B cell (primary cell): ENCODE measurements at regions of chr2 and their contacts with region 1.

Region 1: DNA sequence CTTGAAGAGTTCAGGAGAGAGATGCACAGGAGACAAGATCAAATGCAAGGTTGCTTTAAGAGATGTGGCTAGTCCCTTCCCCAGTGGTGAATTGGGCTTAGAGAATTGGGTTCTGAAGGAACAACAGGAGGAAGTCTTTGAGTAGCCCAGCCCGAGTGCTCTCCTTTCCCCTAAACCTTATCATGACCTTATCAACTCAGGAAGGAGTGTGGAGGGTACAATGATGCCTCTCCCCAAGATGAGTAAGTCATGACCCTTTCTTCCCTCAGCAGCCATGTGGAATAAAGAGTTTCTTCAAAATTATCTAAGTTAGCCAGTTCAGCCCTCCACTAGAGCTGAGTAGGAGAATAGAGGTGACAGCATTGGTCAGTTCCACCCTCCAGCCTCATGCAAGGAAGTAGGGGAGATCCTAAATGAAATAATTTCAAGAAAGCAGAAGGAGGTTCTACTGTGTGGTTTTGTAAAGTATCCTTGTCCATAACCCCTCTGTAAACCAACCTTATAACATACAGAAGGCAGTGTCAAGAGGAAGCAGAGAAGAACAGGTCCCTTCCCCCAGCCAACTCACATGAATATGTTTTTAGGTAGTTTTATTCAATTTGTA is 88.4 kb downstream of the ARHGAP15 start:
- DNase-seq: no peak
- ATAC-seq: peak; percentile 17
- H3K4me3 ChIP-seq: no peak overlapping the region
- H3K4me3 Mint-ChIP-seq: no peak overlapping the region
- H3K27ac ChIP-seq: peak overlapping the region in 1 of 2 donors; percentile 57
- H3K27ac Mint-ChIP-seq: peak overlapping the region; percentile 84
- H3K4me1 ChIP-seq: no peaks in the 10 kb centered on the region
- H3K4me1 Mint-ChIP-seq: peaks cover 16% of the 10 kb centered on the region
- H3K27me3 ChIP-seq: no peaks in the 10 kb centered on the region
- H3K27me3 Mint-ChIP-seq: no peaks in the 10 kb centered on the region
- CTCF ChIP-seq: no peak

Region 2: DNA sequence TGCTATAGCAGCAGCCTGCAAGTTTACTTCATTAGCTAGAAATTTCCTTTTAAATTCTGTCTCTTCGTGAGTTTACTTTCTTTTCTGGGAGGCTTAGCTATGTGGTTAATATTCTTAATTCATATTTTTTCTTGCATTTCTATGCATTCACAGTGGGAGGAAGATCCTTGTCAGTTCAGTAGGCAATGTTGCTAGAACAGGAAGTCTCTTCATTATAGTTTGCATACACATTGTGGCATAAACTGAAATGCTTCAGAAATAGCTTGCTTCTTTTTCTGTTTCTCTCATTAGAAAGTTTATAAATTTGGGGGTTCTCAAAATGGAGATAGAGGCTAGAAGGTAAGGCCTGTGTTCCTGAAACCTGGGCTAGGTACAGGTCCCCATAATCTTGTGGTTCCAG is 96.5 kb before region 1 on chr2:
- CTCF ChIA-PET with region 1: interaction called, 13 read pairs
- POLR2A ChIA-PET with region 1: no interaction called
- intact Hi-C with region 1: no loop called
- DNase-seq: no peak
- ATAC-seq: no peak
- H3K4me3 ChIP-seq: peak overlapping the region in 2 of 5 experiments; percentile 6 to 34
- H3K4me3 Mint-ChIP-seq: no peak overlapping the region
- H3K27ac ChIP-seq: peak overlapping the region; percentile 45 to 72
- H3K27ac Mint-ChIP-seq: no peak overlapping the region
- H3K4me1 ChIP-seq: peaks cover 33 to 35% of the 10 kb centered on the region in 2 donors
- H3K4me1 Mint-ChIP-seq: peaks cover 17% of the 10 kb centered on the region
- H3K27me3 ChIP-seq: no peaks in the 10 kb centered on the region
- H3K27me3 Mint-ChIP-seq: no peaks in the 10 kb centered on the region
- CTCF ChIP-seq: no peak

Region 3: DNA sequence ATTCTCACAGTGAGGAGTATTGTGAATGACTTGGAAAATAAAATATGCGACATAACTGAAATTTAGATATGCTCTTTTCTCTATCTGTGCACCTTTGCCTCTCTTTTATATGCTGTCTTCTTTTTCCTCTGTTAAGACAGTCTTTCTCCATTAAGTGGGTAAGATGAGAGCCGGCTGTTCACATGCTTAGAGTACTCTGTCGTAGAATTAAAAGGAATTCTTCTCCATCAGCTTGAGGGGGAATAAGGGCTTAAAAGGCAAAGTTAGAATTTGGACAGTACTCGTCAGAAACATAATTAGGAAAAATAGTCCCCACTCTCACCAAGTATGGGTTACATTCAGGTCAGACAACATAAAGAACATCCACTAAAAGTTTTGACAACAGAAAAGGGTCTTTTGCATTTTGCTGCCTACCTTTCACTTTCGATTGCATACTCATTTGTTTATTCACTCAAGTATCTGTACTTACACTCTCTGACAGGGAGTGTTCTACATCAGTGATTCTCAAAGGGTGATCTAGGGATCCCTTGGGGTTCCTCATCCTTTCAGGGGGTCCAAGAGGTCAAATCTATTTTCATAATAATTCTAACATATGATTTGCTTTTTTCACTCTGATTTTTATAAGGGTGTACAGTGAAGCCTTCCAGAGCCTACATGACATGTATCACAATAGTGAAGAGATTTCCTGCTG is 40.4 kb before region 1 on chr2:
- CTCF ChIA-PET with region 1: interaction called, 6 read pairs
- POLR2A ChIA-PET with region 1: no interaction called
- intact Hi-C with region 1: loop called (anchors 5 kb)
- DNase-seq: peak; percentile 74
- ATAC-seq: peak; percentile 95
- H3K4me3 ChIP-seq: peak overlapping the region in 3 of 5 experiments; percentile 29 to 57 (median 38)
- H3K4me3 Mint-ChIP-seq: peak overlapping the region; percentile 87
- H3K27ac ChIP-seq: peak overlapping the region; percentile 88 to 90
- H3K27ac Mint-ChIP-seq: peak overlapping the region; percentile 96
- H3K4me1 ChIP-seq: peaks cover 34 to 38% of the 10 kb centered on the region in 2 donors
- H3K4me1 Mint-ChIP-seq: peaks cover 61% of the 10 kb centered on the region
- H3K27me3 ChIP-seq: no peaks in the 10 kb centered on the region
- H3K27me3 Mint-ChIP-seq: no peaks in the 10 kb centered on the region
- CTCF ChIP-seq: no peak

Region 4: DNA sequence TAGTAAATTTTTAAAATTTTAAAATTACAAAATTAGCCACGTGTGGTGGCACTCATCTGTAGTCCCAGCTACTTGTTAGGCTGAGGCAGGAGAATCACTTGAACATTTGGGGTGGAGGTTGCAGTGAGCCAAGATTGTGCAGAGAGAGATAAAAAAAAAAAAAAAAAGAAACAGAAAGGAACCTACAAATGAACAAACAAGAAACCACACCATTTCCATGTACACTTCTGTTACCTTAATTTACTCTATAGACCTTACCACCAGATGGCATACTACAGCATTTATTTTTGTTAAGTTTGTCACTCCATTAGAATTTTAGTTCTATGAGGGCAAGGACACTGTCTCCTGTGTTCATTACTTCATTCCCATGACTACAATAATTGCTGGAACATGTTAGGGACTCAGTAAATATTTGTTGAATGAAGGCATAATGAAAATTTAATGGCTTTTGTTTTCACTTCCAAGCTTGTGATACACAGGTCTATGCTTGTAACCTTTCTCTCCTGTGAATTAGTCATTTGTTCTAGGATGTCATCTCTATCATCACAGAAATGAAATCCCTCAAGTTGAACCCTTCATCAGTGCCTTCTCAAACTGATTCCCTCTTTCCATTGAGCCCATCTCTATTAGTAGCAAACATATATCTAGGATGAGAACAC is 12.4 kb before region 1 on chr2:
- CTCF ChIA-PET with region 1: interaction called, 25 read pairs
- POLR2A ChIA-PET with region 1: no interaction called
- intact Hi-C with region 1: no loop called
- DNase-seq: peak; percentile 55
- ATAC-seq: peak; percentile 39
- H3K4me3 ChIP-seq: no peak overlapping the region
- H3K4me3 Mint-ChIP-seq: no peak overlapping the region
- H3K27ac ChIP-seq: peak overlapping the region in 1 of 2 donors; percentile 50
- H3K27ac Mint-ChIP-seq: peak overlapping the region; percentile 16
- H3K4me1 ChIP-seq: peaks cover 10 to 17% of the 10 kb centered on the region in 2 donors
- H3K4me1 Mint-ChIP-seq: peaks cover 29% of the 10 kb centered on the region
- H3K27me3 ChIP-seq: no peaks in the 10 kb centered on the region
- H3K27me3 Mint-ChIP-seq: no peaks in the 10 kb centered on the region
- CTCF ChIP-seq: peak; percentile 56